PC-3 (cell line): ENCODE measurements at regions of chr13 and their contacts with region 1.

Region 1: GRCh38 chr13:45807520-45808099 is 43.9 kb downstream of the SIAH3 start:
- DNase-seq: peak; percentile 59
- ATAC-seq: peak; percentile 84
- H3K4me3 ChIP-seq: no peak overlapping the region
- H3K27ac ChIP-seq: no peak overlapping the region
- H3K4me1 ChIP-seq: no peaks in the 10 kb centered on the region
- H3K27me3 ChIP-seq: no peaks in the 10 kb centered on the region
- CTCF ChIP-seq: peak; percentile 66

Region 2: DNA sequence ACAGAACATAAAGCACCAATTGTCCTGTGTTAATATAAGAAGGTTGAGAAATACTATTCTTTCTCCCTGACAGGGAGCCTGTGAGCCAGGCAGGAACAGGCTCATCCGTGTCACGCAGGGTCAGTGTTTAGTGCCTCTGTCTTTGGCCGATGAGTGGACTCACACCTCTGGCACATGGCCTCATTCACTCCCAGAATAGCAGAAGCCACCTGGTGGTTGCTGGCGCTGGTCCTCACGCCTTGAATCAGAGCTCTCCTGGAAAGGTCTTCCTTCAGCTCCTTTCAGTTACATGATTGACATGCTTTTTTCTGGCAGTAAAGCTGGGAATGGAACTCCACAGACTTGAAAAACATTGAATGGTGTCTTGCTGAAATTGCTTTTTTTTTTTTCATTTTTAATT is 72.1 kb after region 1 on chr13:
- CTCF ChIA-PET with region 1: interaction called, 10 read pairs
- POLR2A ChIA-PET with region 1: no interaction called
- intact Hi-C with region 1: loop called (anchors 1 kb)
- DNase-seq: peak; percentile 41
- ATAC-seq: peak; percentile 54
- H3K4me3 ChIP-seq: no peak overlapping the region
- H3K27ac ChIP-seq: no peak overlapping the region
- H3K4me1 ChIP-seq: 0 out of 2 replicates have a peak, but pooled peaks cover 3% of the 10 kb centered on the region
- H3K27me3 ChIP-seq: no peaks in the 10 kb centered on the region
- CTCF ChIP-seq: peak; percentile 53

Region 3: GRCh38 chr13:45950386-45951000 is 142.9 kb after region 1 on chr13:
- CTCF ChIA-PET with region 1: no interaction called
- POLR2A ChIA-PET with region 1: no interaction called
- intact Hi-C with region 1: loop called (anchors 10 kb)
- DNase-seq: no peak
- ATAC-seq: no peak
- H3K4me3 ChIP-seq: no peak overlapping the region
- H3K27ac ChIP-seq: no peak overlapping the region
- H3K4me1 ChIP-seq: no peaks in the 10 kb centered on the region
- H3K27me3 ChIP-seq: no peaks in the 10 kb centered on the region
- CTCF ChIP-seq: no peak

Region 4: DNA sequence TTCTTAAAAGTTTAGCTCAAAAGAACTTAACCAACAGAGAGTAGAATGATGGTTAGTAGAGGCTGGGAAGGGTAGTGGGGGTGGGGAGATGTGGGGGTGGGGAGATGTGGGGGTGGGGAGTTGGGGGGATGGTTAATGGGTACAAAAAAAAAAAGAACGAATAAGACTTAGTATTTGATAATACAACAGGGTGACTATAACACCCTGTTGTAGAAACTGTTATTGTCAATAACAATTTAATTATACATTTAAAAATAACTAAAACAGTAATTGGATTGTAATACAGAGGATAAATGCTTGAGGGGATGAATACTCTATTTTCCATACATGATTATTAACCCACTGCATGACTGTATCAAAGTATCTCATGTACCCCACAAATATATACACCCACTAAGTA is 153.9 kb after region 1 on chr13:
- CTCF ChIA-PET with region 1: no interaction called
- POLR2A ChIA-PET with region 1: no interaction called
- intact Hi-C with region 1: loop called (anchors 5 kb)
- DNase-seq: no peak
- ATAC-seq: no peak
- H3K4me3 ChIP-seq: no peak overlapping the region
- H3K27ac ChIP-seq: no peak overlapping the region
- H3K4me1 ChIP-seq: no peaks in the 10 kb centered on the region
- H3K27me3 ChIP-seq: no peaks in the 10 kb centered on the region
- CTCF ChIP-seq: no peak

Region 5: GRCh38 chr13:46126552-46127357 is 319.1 kb after region 1 on chr13:
- CTCF ChIA-PET with region 1: interaction called, 4 read pairs
- POLR2A ChIA-PET with region 1: no interaction called
- intact Hi-C with region 1: loop called (anchors 1 kb)
- DNase-seq: peak; percentile 81
- ATAC-seq: peak; percentile 95
- H3K4me3 ChIP-seq: no peak overlapping the region
- H3K27ac ChIP-seq: no peak overlapping the region
- H3K4me1 ChIP-seq: no peaks in the 10 kb centered on the region
- H3K27me3 ChIP-seq: no peaks in the 10 kb centered on the region
- CTCF ChIP-seq: peak; percentile 83

Region 6: DNA sequence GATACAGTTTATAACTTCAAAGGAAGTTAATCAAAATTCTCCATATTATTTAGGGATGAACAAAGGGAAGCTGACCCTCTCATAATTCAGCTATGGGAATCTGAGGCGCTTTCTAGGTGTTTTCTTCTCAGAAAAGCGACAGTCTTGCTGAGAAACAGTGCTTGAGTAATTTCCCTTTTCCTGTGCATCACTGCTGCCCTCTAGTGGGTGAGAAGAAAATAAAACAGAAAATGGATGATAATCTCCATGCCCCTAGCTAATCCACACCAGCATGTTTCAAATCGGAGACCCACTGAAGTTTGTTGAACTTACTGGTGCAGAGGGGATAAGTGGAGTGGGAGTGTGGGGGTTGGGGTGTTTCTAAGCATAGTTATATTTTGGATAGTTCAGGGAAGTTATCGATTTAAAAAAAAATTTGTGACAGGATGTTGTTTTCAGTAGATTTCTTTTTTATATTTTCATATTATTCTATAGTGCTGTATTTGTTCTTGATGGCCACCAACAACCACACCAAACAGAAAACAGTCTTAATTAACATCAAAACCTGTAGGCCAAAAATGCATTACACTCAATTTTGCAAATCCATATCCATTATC is 353.0 kb after region 1 on chr13:
- CTCF ChIA-PET with region 1: no interaction called
- POLR2A ChIA-PET with region 1: no interaction called
- intact Hi-C with region 1: loop called (anchors 2 kb)
- DNase-seq: peak; percentile 57
- ATAC-seq: peak; percentile 70
- H3K4me3 ChIP-seq: no peak overlapping the region
- H3K27ac ChIP-seq: no peak overlapping the region
- H3K4me1 ChIP-seq: no peaks in the 10 kb centered on the region
- H3K27me3 ChIP-seq: no peaks in the 10 kb centered on the region
- CTCF ChIP-seq: peak; percentile 77

Region 7: DNA sequence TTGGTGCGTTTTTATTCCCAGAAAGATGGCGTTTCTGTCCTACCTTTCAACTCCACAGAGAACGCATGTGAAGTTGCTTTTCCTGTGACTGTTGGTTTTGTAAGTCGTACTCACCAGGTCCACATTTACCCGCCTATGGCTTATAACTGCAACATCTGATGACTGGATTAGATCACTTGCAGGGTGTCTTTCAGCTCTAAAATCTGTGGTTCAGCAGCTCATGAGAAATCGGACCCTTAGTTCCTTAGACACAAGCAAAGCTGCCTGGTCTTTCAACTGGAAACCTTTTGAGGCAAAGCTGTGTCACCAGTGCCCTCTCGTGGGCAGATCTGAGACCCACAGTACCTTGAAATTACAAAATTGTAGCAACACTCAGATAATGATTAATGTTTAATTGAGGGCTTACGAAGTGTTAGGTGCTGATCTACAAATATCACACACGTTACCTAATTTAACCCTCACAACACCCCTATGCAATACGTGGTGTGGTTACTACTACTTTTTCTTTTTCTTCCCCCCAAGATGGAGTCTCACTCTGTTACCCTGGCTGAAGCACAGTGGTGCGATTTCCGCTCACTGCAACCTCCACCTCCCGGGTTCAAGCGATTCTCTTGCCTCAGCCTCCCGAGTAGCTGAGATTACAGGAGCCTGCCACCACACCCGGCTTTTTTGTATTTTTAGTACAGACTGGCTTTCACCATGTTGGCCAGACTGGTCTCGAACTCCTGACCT is 514.0 kb after region 1 on chr13:
- CTCF ChIA-PET with region 1: interaction called, 6 read pairs
- POLR2A ChIA-PET with region 1: no interaction called
- intact Hi-C with region 1: loop called (anchors 5 kb)
- DNase-seq: peak; percentile 59
- ATAC-seq: peak; percentile 55
- H3K4me3 ChIP-seq: no peak overlapping the region
- H3K27ac ChIP-seq: no peak overlapping the region
- H3K4me1 ChIP-seq: no peaks in the 10 kb centered on the region
- H3K27me3 ChIP-seq: 0 out of 2 replicates have a peak, but pooled peaks cover 2% of the 10 kb centered on the region
- CTCF ChIP-seq: peak; percentile 81